ENCODE measurements at regions of chr6 and their contacts with region 1.

Region 1: DNA sequence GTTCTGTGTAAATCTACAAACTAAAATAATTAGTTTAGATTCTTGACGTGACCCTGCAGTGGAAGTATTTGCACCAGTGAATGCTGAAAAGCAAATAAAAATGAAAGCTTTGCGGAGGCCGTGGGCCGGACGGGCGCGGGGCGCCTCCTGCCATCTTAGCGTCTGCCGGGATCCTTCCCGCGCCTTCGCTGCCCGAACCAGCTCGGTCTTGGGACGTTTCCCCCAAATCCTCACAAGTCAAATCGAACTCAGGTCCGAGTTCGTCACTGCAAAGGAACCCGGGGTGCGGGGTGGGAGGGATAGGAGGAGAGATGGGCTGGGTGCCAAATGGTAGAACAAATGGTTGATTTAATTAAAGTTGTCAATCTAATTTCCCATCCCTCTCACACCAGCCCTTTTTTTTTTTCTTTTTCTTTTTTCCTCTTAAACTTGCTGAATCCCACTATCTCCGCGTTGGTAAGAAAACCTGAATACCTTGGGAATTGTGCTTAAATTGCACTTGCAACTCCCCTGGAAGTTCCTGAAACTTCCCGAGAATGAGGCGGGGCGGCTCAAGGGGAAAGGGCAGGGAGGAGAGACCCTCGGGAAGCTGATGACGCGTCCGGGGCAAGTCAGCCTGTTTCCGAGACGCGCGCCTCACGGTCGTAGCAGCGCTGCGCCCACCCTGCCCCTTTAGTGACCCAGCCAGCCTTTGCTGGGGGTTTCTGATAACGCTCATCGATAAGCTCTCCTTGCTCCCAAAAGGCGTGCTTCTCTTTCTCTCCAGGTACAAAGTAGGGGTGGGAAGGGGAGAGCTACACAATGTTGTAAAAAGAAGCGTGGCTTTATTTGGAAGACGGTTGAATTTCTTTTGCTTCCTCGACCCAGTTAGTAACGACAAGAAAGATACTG is 1.8 kb downstream of the GJA1 start:
- DNase-seq: no peak
- H3K4me3 ChIP-seq: peak overlapping the region; percentile 69 to 81 (median 72)
- H3K27ac ChIP-seq: peak overlapping the region; percentile 87 to 94 (median 92)
- H3K4me1 ChIP-seq: peaks cover 0 to 56% (median 44%) of the 10 kb centered on the region in 4 donors
- H3K27me3 ChIP-seq: no peaks in the 10 kb centered on the region
- CTCF ChIP-seq: no peak
- EP300 ChIP-seq: no peak
- POLR2A ChIP-seq: no peak

Region 2: DNA sequence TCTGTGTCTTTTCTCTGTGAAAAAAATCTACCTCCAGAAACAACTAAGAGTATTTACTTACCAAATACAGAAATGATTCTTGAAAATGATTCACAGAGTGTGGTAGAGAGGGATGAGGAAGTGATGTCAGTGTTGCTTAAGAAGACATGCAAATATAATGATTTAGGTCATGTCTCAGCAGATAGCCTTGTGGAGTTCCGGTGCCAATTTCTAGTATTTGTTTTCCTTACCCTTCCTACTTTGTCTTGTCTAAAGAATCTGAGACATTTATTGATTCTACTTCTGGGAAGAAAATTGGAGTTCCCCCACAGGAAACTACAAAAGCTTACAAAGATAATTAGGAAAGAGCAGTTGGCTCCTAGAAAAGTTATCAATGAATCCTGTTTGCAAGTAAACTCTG is 67.0 kb after region 1 on chr6:
- intact Hi-C with region 1: loop called (anchors 5 kb)
- DNase-seq: no peak
- H3K4me3 ChIP-seq: no peak overlapping the region
- H3K27ac ChIP-seq: peak overlapping the region; percentile 81 to 87 (median 82)
- H3K4me1 ChIP-seq: peaks cover 13 to 62% (median 35%) of the 10 kb centered on the region in 4 donors
- H3K27me3 ChIP-seq: no peaks in the 10 kb centered on the region
- CTCF ChIP-seq: no peak
- EP300 ChIP-seq: peak; percentile 54
- POLR2A ChIP-seq: no peak

Region 3: DNA sequence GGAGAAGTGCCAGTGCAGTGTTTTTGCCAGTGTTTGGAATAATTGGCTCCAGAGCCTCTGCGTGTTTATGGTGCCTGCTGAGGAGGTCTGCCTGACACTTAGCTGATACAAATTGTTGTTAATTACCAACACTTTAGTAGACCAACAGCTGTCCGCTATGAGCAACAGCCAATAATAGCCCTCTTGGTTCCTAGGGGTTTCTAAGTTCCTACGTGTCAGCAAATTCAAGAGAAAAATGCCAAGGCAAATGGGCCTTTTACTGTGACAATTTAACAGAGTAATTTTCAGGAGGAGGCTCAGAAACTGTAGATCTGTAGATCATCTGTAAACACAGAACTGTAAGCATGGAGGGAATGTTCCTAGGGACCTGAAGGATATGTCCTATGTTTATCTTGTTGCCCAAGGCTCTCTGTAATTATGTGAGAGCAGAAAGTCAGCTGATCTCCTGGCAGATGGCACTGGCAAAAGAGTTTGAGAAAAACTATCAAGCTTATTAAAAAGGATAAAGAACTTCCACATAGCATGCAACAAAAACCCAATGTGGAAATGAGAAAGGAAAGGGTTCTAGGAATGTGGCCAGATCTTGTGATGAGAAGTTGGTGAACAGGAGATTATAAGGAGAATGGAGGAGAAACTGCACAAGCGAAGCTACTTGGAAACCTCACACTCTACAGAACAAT is 155.9 kb after region 1 on chr6:
- intact Hi-C with region 1: loop called (anchors 5 kb)
- DNase-seq: no peak
- H3K4me3 ChIP-seq: no peak overlapping the region
- H3K27ac ChIP-seq: peak overlapping the region; percentile 33 to 65 (median 60)
- H3K4me1 ChIP-seq: peaks cover 0 to 43% (median 22%) of the 10 kb centered on the region in 4 donors
- H3K27me3 ChIP-seq: no peaks in the 10 kb centered on the region
- CTCF ChIP-seq: no peak
- EP300 ChIP-seq: peak; percentile 42
- POLR2A ChIP-seq: no peak